Endothelial cell of umbilical vein (primary cell): ENCODE measurements at regions of chr15 and their contacts with region 1.

Region 1: GRCh38 chr15:99343881-99344551 is 92.7 kb downstream of the LRRC28 start:
- DNase-seq: peak; percentile 75
- H3K4me3 ChIP-seq: no peak overlapping the region
- H3K27ac ChIP-seq: peak overlapping the region; percentile 13
- H3K4me1 ChIP-seq: peaks cover 14% of the 10 kb centered on the region
- H3K27me3 ChIP-seq: no peaks in the 10 kb centered on the region
- CTCF ChIP-seq: peak; percentile 68 to 70
- POLR2A ChIP-seq: no peak

Region 2: GRCh38 chr15:99250494-99251435 is 93.3 kb before region 1 on chr15:
- CTCF ChIA-PET with region 1: no interaction called
- POLR2A ChIA-PET with region 1: no interaction called
- dilution Hi-C with region 1: no loop called
- intact Hi-C with region 1: no loop called
- DNase-seq: peak; percentile 100
- H3K4me3 ChIP-seq: peak overlapping the region; percentile 77 to 100 (median 80)
- H3K27ac ChIP-seq: peak overlapping the region; percentile 89
- H3K4me1 ChIP-seq: peaks cover 30% of the 10 kb centered on the region
- H3K27me3 ChIP-seq: no peaks in the 10 kb centered on the region
- CTCF ChIP-seq: no peak
- POLR2A ChIP-seq: peak; percentile 89

Region 3: GRCh38 chr15:99333413-99333812 is 10.6 kb before region 1 on chr15:
- CTCF ChIA-PET with region 1: interaction called, 14 read pairs
- POLR2A ChIA-PET with region 1: no interaction called
- dilution Hi-C with region 1: no loop called
- intact Hi-C with region 1: no loop called
- DNase-seq: peak; percentile 20
- H3K4me3 ChIP-seq: no peak overlapping the region
- H3K27ac ChIP-seq: no peak overlapping the region
- H3K4me1 ChIP-seq: peaks cover 13% of the 10 kb centered on the region
- H3K27me3 ChIP-seq: no peaks in the 10 kb centered on the region
- CTCF ChIP-seq: no peak
- POLR2A ChIP-seq: no peak

Region 4: GRCh38 chr15:99486371-99487336 is 142.6 kb after region 1 on chr15:
- CTCF ChIA-PET with region 1: interaction called, 4 read pairs
- POLR2A ChIA-PET with region 1: no interaction called
- dilution Hi-C with region 1: no loop called
- intact Hi-C with region 1: loop called (anchors 5 kb)
- DNase-seq: peak; percentile 61
- H3K4me3 ChIP-seq: peak overlapping the region; percentile 26 to 53 (median 32)
- H3K27ac ChIP-seq: no peak overlapping the region
- H3K4me1 ChIP-seq: peaks cover 18% of the 10 kb centered on the region
- H3K27me3 ChIP-seq: no peaks in the 10 kb centered on the region
- CTCF ChIP-seq: no peak
- POLR2A ChIP-seq: no peak

Region 5: DNA sequence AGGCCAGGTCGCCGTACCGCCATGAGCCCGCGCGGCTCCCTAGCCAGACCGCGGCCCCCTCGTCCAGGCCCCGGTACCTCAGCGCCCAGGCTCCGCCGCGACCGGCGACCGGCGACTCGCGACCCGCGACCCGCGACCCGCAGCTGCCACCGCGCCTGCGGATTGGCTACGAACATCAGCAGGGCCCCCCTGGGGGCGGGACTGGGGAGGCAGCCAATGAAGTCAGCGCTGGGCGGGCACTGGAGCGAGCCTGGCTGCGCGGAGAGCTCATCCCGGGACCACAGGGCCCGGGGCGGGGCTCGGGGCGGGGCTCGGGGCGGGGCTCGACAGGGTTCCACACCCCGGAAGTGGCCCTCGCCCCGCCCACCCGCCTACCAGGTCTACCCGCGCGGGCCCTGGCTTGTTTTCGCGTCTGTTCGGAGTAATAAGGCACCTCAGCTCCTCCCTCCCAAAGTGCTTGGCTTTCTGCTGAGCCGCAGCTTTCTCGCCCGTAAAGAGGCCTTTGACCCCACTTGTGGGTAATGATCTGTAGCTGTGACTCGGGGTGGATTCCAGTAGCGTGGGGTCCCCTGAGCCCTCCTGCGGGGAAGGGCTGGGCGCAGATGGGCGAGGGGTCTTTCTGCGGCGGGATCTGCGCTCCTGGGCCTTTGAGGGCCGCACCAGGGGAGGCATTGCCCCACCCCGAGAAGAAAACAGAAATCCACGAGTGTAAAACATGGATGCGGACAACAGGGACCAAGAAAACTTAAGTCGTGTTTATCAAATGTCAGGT is 389.4 kb after region 1 on chr15 and contains the start of gene LYSMD4:
- CTCF ChIA-PET with region 1: interaction called, 3 read pairs
- POLR2A ChIA-PET with region 1: no interaction called
- dilution Hi-C with region 1: no loop called
- intact Hi-C with region 1: loop called (anchors 1 kb)
- DNase-seq: peak; percentile 93
- H3K4me3 ChIP-seq: peak within 1 kb of the TSS; percentile 63 to 79 (median 71)
- H3K27ac ChIP-seq: peak within 1 kb of the TSS; percentile 21
- H3K4me1 ChIP-seq: peaks cover 5% of the 10 kb centered on the region
- H3K27me3 ChIP-seq: no peaks in the 10 kb centered on the region
- CTCF ChIP-seq: no peak
- POLR2A ChIP-seq: no peak
- total RNA-seq, gene LYSMD4: 7.0 and 8.4 TPM in 2 replicates